Activated B cell treated with CpG ODN at 0.5 μM for 24 hours (primary cell): ENCODE measurements at regions of chr2 and their contacts with region 1.

Region 1: GRCh38 chr2:109331896-109332848 is 203.2 kb downstream of the SH3RF3 start:
- DNase-seq: no peak
- ATAC-seq: peak; percentile 47
- H3K4me3 Mint-ChIP-seq: peak overlapping the region; percentile 80
- H3K27ac Mint-ChIP-seq: peak overlapping the region; percentile 27
- H3K4me1 Mint-ChIP-seq: peaks cover 42% of the 10 kb centered on the region
- H3K27me3 Mint-ChIP-seq: no peaks in the 10 kb centered on the region
- CTCF ChIP-seq: no peak

Region 2: DNA sequence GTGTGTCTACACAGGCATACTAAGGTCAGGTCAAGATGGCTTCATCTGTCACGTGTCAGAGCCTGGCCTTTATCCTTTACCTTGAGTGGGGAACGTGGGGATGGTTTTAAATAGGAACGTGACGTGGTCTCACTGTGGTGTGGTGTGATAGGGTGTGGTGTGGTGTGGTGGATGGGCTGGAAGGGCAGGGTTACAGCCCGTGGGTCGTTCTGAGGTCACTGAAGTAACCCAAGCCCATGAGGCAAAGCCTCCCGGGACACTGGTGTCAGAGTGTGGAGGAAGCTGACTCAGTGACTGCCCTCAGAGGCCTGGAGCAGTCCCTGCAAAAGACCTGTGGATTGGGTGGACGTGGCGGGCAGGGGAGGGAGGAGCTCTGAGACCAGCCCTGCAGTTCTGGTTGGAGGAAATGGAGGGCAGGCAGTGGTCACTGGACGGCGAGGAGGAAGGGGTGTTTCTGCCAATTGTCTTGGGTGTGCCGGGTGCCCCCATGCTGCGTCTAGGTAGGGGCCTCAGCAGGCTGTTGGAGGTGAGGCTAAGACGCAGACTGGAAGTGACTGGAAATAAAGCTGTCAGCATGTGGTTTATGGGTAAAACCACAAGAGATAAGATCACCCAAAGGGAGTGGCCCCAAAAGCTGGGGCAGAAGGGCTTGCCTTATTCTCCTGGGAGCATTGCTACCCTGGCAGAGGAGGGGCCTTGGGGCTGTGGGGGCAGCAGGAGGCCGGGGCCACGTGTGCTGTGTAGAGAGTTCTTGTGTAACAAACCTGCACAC is 118.3 kb before region 1 on chr2:
- CTCF ChIA-PET with region 1: no interaction called
- POLR2A ChIA-PET with region 1: no interaction called
- intact Hi-C with region 1: loop called (anchors 5 kb)
- DNase-seq: no peak
- ATAC-seq: peak; percentile 79
- H3K4me3 Mint-ChIP-seq: peak overlapping the region; percentile 21
- H3K27ac Mint-ChIP-seq: peak overlapping the region; percentile 18
- H3K4me1 Mint-ChIP-seq: peaks cover 80% of the 10 kb centered on the region
- H3K27me3 Mint-ChIP-seq: peaks cover 10% of the 10 kb centered on the region
- CTCF ChIP-seq: no peak

Region 3: GRCh38 chr2:109254174-109254904 is 77.8 kb before region 1 on chr2:
- CTCF ChIA-PET with region 1: no interaction called
- POLR2A ChIA-PET with region 1: no interaction called
- intact Hi-C with region 1: loop called (anchors 10 kb)
- DNase-seq: no peak
- ATAC-seq: peak; percentile 73
- H3K4me3 Mint-ChIP-seq: peak overlapping the region; percentile 50
- H3K27ac Mint-ChIP-seq: peak overlapping the region; percentile 51
- H3K4me1 Mint-ChIP-seq: peaks cover 45% of the 10 kb centered on the region
- H3K27me3 Mint-ChIP-seq: no peaks in the 10 kb centered on the region
- CTCF ChIP-seq: no peak

Region 4: DNA sequence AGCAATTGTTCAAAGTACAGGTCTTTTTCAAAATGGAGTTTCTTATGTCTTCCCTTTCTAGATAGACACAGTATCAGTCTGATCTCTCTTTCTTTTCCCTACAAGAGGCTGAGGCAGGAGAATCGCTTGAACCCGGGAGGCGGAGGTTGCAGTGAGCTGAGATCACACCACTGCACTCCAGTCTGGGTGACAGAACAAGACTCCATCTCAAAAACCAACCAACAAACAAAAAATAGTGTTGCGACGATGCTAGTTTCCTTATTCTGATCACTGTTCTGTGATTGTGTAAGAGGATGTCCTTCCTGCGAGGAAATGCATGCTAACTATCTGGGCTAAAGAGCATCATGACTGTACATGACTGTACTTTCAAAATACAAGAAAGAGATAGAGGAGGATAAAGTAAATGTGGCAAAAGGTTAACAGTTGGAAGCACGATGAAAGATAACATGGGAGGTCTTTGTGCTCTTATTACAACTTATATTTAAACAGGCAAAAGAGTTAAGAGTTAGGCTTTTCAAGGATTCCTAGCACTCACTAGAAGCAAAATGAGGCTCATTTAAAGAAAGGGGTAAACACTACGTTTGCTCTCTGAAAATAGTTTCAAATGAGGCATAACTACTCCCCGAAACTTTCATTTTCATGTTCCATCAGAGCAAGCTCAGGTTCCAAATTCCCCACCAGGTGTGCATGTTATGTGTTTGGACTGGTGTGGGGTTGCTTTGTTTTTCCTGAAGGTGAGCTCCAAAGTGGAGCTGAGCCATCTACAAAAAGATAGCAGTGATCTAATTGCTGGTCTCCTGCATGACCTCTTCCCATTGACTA is 305.8 kb after region 1 on chr2:
- CTCF ChIA-PET with region 1: no interaction called
- POLR2A ChIA-PET with region 1: no interaction called
- intact Hi-C with region 1: no loop called
- DNase-seq: no peak
- ATAC-seq: no peak
- H3K4me3 Mint-ChIP-seq: no peak overlapping the region
- H3K27ac Mint-ChIP-seq: no peak overlapping the region
- H3K4me1 Mint-ChIP-seq: no peaks in the 10 kb centered on the region
- H3K27me3 Mint-ChIP-seq: peaks cover 2% of the 10 kb centered on the region
- CTCF ChIP-seq: no peak